ENCODE measurements at regions of chr3 and their contacts with region 1.

Region 1: GRCh38 chr3:46078712-46079400 is 51.6 kb upstream of the XCR1 start:
- DNase-seq: peak; percentile 78 to 97
- ATAC-seq: peak; percentile 97 to 100 (median 100)
- H3K4me3 ChIP-seq: no peak overlapping the region
- H3K4me3 Mint-ChIP-seq: no peak overlapping the region
- H3K27ac ChIP-seq: no peak overlapping the region
- H3K27ac Mint-ChIP-seq: peak overlapping the region in 1 of 2 donors; percentile 5
- H3K4me1 ChIP-seq: peaks cover 3% of the 10 kb centered on the region
- H3K4me1 Mint-ChIP-seq: peaks cover 10 to 12% of the 10 kb centered on the region in 2 donors
- H3K27me3 ChIP-seq: no peaks in the 10 kb centered on the region
- H3K27me3 Mint-ChIP-seq: peaks cover 0 to 2% of the 10 kb centered on the region in 2 donors
- CTCF ChIP-seq: peak; percentile 100

Region 2: DNA sequence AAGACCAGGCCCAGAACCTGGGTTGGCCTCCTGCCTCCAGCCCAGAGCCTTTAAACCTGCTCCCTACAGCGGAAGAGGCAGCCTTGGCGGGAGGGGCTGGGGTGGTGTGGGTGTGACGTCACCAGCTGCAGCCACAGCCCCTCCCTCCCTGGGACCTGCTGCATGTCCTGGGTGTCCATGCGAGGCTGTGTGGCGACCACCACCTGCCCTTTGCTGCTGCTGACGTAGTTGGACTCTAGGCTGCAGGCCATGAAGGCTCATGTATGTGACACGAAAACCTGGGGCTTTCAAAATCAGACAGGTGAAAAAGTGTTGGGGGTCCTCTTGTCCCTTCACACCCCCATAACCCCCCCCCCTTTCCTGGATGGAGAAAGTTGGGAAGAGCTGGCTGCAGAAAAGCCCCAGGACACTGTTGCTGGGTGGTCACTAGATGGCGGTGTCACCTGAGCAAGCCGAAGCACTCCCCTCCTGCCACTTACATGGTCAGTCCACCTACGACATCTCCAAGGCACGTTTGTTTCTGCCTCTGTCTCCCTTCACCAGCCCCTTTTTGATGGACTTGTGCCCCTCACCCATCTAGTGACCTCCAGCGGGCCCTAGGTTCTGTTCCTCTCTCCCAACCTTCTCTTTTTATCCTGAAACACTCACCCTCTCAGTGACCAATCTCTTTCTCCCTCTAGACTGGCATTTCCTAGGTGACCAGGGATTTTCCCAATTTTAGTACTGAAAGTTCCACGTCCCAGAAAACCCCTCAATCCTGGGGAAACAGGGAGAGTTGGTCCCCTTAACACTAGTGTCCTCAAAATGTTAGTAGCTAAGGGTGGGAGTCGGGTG is 317.8 kb before region 1 on chr3:
- intact Hi-C with region 1: loop called (anchors 2 kb)
- DNase-seq: peak; percentile 33 to 75
- ATAC-seq: peak; percentile 71 to 88 (median 88)
- H3K4me3 ChIP-seq: no peak overlapping the region
- H3K4me3 Mint-ChIP-seq: no peak overlapping the region
- H3K27ac ChIP-seq: no peak overlapping the region
- H3K27ac Mint-ChIP-seq: no peak overlapping the region
- H3K4me1 ChIP-seq: peaks cover 8% of the 10 kb centered on the region
- H3K4me1 Mint-ChIP-seq: peaks cover 4 to 6% of the 10 kb centered on the region in 2 donors
- H3K27me3 ChIP-seq: no peaks in the 10 kb centered on the region
- H3K27me3 Mint-ChIP-seq: no peaks in the 10 kb centered on the region
- CTCF ChIP-seq: peak; percentile 68

Region 3: GRCh38 chr3:45938864-45939263 is 140.0 kb before region 1 on chr3:
- intact Hi-C with region 1: loop called (anchors 1 kb)
- DNase-seq: peak; percentile 74 to 95
- ATAC-seq: peak; percentile 90 to 92 (median 91)
- H3K4me3 ChIP-seq: no peak overlapping the region
- H3K4me3 Mint-ChIP-seq: no peak overlapping the region
- H3K27ac ChIP-seq: no peak overlapping the region
- H3K27ac Mint-ChIP-seq: no peak overlapping the region
- H3K4me1 ChIP-seq: peaks cover 38% of the 10 kb centered on the region
- H3K4me1 Mint-ChIP-seq: peaks cover 7 to 31% of the 10 kb centered on the region in 2 donors
- H3K27me3 ChIP-seq: no peaks in the 10 kb centered on the region
- H3K27me3 Mint-ChIP-seq: no peaks in the 10 kb centered on the region
- CTCF ChIP-seq: peak; percentile 81

Measured in natural killer cell (primary cell).